PC-9 (cell line): ENCODE measurements at regions of chr3 and their contacts with region 1.

Region 1: GRCh38 chr3:156816800-156817645 is 9.1 kb upstream of the LEKR1 start:
- DNase-seq: peak; percentile 86 to 92
- H3K4me3 ChIP-seq: peak overlapping the region; percentile 87
- H3K27ac ChIP-seq: peak overlapping the region; percentile 97
- H3K4me1 ChIP-seq: peaks cover 71% of the 10 kb centered on the region
- H3K27me3 ChIP-seq: no peaks in the 10 kb centered on the region
- CTCF ChIP-seq: peak; percentile 17; the same call in 1 of the 2 replicates

Region 2: DNA sequence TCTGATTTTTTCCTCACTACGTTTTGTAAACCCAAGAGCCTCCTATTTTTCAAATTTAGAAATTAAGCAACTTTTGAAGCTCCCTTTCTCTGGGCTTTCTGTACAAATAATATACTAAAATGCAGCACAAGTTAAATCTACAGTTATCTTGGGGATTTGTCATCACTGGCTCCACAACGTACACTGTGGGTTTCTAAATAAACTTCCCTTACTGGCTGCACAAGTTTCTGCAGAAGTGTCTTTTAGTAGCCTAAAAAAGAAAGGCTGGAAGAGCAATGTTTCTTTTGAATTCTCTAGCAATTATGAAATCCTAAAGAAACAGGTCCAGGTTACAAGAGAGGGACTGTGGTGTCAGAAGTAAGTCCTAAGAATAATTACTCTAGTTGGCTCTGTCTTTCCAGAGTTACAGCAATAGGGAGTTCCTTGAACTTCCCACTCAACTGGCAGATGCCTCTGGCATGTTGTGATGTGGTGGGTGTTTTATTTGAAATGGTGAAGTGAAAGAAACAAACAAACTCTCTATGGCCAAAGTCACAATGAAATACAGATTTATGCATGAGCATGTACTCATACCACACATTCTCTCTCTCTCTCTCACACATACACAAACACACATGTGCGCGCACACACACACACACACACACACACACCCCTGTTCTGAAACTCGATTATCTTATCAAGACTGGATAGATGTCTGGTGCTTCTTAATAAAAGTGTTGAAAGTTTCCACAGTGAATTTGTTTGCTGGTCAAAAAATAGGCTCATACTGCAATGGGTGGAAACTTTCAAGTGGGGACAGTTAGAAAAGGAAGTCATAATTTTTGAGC is 460.3 kb before region 1 on chr3:
- CTCF ChIA-PET with region 1: no interaction called
- POLR2A ChIA-PET with region 1: no interaction called
- intact Hi-C with region 1: no loop called
- DNase-seq: no peak
- H3K4me3 ChIP-seq: no peak overlapping the region
- H3K27ac ChIP-seq: no peak overlapping the region
- H3K4me1 ChIP-seq: no peaks in the 10 kb centered on the region
- H3K27me3 ChIP-seq: no peaks in the 10 kb centered on the region
- CTCF ChIP-seq: no peak

Region 3: DNA sequence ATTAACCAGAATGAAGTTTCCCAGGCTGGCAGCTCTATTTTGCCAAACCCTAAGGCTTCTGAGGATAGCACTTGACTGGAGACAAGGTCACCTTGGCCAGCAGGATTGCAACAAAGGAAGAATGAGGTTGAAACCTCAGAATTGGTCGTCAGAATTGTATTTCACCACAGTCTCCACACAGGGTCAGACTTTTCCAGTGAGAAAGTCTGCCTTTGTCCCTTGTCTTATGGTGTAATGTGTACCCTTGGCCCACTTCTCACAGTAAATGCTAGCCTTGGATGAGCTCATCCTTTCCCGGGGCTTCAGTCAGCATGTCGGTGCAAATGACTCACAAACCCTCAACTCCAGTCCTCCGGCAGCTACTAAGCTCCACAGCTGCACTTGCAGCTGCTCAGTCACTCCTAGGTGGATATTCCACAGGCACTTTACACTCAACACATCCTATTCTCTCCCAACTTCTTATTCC is 281.8 kb before region 1 on chr3:
- CTCF ChIA-PET with region 1: no interaction called
- POLR2A ChIA-PET with region 1: no interaction called
- intact Hi-C with region 1: loop called (anchors 5 kb)
- DNase-seq: peak; percentile 70 to 98
- H3K4me3 ChIP-seq: no peak overlapping the region
- H3K27ac ChIP-seq: peak overlapping the region; percentile 72
- H3K4me1 ChIP-seq: peaks cover 21% of the 10 kb centered on the region
- H3K27me3 ChIP-seq: no peaks in the 10 kb centered on the region
- CTCF ChIP-seq: peak; percentile 59

Region 4: GRCh38 chr3:156554842-156555687 is 262.0 kb before region 1 on chr3 and contains the start of gene SSR3:
- CTCF ChIA-PET with region 1: no interaction called
- POLR2A ChIA-PET with region 1: no interaction called
- intact Hi-C with region 1: loop called (anchors 5 kb)
- DNase-seq: peak; percentile 98 to 99
- H3K4me3 ChIP-seq: peak within 1 kb of the TSS; percentile 99
- H3K27ac ChIP-seq: peak within 1 kb of the TSS; percentile 83
- H3K4me1 ChIP-seq: peaks cover 35% of the 10 kb centered on the region
- H3K27me3 ChIP-seq: no peaks in the 10 kb centered on the region
- CTCF ChIP-seq: peak; percentile 19; the same call in 1 of the 2 replicates
- total RNA-seq, gene SSR3: 117 and 152 TPM in 2 replicates

Region 5: GRCh38 chr3:156630081-156630772 is 186.8 kb before region 1 on chr3:
- CTCF ChIA-PET with region 1: no interaction called
- POLR2A ChIA-PET with region 1: no interaction called
- intact Hi-C with region 1: loop called (anchors 2 kb)
- DNase-seq: peak; percentile 53 to 93
- H3K4me3 ChIP-seq: no peak overlapping the region
- H3K27ac ChIP-seq: peak overlapping the region; percentile 84
- H3K4me1 ChIP-seq: peaks cover 67% of the 10 kb centered on the region
- H3K27me3 ChIP-seq: no peaks in the 10 kb centered on the region
- CTCF ChIP-seq: no peak

Region 6: DNA sequence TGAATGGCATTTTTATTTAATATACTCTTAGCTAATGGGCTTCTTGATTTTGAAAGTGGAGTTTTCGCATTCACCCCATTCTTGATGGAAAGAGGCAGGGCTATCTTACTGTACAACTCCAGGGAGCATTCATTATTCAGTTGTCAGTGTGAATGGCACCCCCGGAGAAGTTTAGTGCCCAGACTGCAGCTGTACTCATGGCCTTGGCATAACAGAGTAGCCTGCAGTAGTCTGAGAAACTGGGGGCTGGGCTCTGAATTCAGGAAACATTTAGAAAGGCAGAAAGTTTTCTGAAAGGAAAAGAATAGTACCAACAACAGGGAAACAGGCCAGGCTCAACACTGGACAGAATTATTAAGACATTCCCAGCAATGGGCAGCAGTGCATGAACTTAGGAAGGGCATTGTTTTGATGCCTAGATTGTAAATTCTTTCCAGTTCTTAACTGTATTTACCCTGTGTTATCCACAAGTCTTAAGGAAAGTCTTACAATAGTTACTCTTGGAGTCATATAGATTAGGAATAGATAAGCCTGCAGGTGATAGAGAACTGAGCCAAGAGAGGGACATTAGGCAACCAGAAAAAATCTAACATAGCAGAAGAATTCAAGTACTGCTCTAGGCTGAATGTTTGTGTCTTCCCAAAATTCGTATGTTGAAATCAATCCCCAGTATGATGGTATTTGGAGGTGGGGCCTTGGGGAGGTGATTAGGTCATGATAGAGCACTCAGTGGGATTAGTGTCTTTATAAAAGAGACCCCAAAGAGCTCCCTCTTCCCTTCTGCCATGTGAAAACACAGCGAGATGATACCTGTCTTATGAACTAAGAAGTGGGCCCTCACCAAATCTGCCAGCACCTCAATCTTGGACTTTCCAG is 98.2 kb before region 1 on chr3:
- CTCF ChIA-PET with region 1: no interaction called
- POLR2A ChIA-PET with region 1: no interaction called
- intact Hi-C with region 1: loop called (anchors 1 kb)
- DNase-seq: peak in 1 of 2 experiments; percentile 94
- H3K4me3 ChIP-seq: no peak overlapping the region
- H3K27ac ChIP-seq: peak overlapping the region; percentile 55
- H3K4me1 ChIP-seq: peaks cover 40% of the 10 kb centered on the region
- H3K27me3 ChIP-seq: no peaks in the 10 kb centered on the region
- CTCF ChIP-seq: no peak

Region 7: DNA sequence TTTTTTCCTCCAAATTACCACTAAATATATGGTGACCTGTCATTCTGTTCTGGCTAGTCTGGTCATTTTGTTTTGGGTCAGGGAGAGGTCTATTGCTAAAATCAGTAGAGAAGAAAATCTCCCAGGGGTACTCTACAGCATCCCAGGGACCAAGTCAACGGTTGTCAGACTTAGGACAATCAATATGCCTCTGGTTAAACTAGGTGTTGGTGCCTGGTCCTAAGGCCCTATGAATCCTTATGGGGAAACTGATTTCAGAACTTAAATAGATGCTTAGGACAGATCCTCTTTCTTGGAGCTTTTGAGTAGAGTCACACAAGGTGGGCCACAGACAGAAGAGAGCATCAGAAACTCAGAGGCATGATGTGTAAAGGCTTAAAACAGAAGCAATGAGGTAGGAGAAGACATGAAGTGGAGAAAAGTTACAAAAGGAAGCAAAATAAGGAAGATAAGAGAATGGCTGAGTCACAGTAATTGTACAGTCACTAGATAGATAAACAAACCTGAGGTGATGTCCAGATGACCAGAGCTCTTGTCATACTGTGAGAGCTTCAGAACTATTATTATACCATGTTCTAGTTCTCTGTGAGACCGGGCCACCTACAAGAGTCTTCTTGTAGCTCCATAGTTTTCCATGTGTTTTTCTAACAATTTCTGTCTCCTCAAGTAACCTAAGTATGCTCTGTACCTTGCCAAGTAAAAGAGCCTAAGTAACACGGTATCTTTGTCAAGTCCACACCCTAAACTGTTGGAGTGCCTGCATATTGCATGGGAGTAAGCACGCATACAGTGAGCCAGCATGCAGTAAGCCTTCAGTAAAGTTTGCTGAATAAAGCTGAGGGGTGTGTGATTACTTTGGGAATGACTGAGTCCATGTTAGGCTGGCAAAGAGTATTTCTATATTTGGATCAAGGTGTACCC is 35.5 kb before region 1 on chr3:
- CTCF ChIA-PET with region 1: no interaction called
- POLR2A ChIA-PET with region 1: no interaction called
- intact Hi-C with region 1: loop called (anchors 5 kb)
- DNase-seq: peak in 1 of 2 experiments; percentile 73
- H3K4me3 ChIP-seq: no peak overlapping the region
- H3K27ac ChIP-seq: peak overlapping the region; percentile 48
- H3K4me1 ChIP-seq: peaks cover 18% of the 10 kb centered on the region
- H3K27me3 ChIP-seq: no peaks in the 10 kb centered on the region
- CTCF ChIP-seq: no peak